Psoas muscle (tissue), 8 donors: ENCODE measurements at regions of chr1 and their contacts with region 1.

Region 1: GRCh38 chr1:167687919-167688519 is 33.8 kb upstream of the MPZL1 start:
- DNase-seq: no peak
- ATAC-seq: peak; percentile 36 to 61 (median 51)
- H3K4me3 ChIP-seq: no peak overlapping the region
- H3K27ac ChIP-seq: peak overlapping the region; percentile 78
- H3K4me1 ChIP-seq: peaks cover 52% of the 10 kb centered on the region
- H3K27me3 ChIP-seq: no peaks in the 10 kb centered on the region
- CTCF ChIP-seq: peak; percentile 96

Region 2: DNA sequence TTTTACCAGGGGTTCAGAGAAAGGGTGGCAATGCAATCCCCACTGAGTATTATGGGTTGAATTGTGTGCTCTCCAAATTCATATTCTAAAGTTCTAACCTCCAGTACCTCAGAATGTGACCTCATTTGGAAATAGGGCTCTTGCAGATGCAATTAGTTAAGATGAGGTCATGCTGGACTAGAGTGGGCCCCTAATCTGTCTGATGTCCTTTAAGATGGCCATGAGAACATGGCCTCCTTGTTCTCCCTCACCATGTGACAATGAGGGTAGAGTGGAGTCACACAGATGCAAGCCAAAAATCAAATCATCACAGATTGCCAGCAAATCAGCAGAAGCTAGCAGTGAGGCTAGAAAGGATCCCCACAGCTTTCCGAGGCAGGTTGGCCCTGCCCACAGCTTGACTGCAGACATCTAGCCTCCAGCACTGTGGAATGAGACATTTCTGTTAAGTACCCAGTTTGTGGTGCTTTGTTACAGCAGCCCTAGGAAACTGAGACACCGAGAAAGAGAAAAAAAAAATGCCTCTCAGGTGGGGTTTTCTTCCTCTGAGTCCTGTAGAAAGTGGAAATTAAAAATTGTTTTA is 109.0 kb before region 1 on chr1:
- intact Hi-C with region 1: no loop called
- DNase-seq: no peak
- ATAC-seq: no peak
- H3K4me3 ChIP-seq: no peak overlapping the region
- H3K27ac ChIP-seq: no peak overlapping the region
- H3K4me1 ChIP-seq: no peaks in the 10 kb centered on the region
- H3K27me3 ChIP-seq: no peaks in the 10 kb centered on the region
- CTCF ChIP-seq: no peak

Region 3: GRCh38 chr1:167599957-167600581 is 88.0 kb before region 1 on chr1:
- intact Hi-C with region 1: loop called (anchors 1 to 2 kb)
- DNase-seq: peak; percentile 31 to 59
- ATAC-seq: peak; percentile 85 to 94 (median 90)
- H3K4me3 ChIP-seq: no peak overlapping the region
- H3K27ac ChIP-seq: peak overlapping the region; percentile 51
- H3K4me1 ChIP-seq: peaks cover 24% of the 10 kb centered on the region
- H3K27me3 ChIP-seq: no peaks in the 10 kb centered on the region
- CTCF ChIP-seq: peak; percentile 62

Region 4: DNA sequence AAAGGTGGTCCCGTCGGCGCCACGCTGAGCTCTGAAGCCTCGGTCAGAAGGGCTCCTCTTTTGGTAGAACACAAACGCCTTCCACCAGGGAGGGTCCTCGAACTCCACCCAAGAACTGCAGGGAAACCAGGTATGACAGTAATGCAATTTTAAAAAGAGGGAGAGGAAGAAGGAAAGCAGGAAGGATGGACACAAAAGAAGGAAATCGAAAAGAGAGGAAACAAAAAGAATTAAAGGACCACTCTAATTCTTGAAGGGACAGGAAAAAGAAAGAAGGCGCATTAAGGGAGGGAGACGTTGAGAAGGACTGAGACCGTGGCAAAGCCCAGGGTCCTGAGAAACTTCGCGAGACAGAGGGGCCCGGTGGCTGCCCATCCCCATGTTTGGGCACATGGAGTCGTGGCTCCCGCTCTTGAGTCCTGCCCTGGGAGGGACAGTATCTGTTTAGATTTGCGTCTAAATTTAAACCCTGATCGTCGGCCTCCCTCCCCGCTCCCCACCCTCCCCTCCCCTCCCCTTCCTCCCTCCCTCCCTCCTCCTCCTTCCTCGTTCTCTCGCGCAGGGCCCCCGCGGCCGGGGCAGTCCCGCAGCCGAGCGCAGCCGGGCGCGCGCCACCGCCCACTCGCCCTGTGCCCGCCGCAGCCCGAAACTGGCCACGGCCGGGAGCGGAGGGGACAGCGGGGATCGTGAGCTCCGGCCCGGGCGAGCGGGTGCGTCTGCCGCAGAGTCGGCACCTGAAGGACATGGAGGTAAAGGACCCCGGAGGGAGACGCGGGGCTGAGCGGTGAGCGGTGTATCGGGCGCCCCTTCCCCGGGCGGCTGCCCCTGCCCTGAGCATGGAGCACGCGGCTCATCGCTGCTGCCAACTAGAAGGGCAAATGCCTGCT is 58.1 kb before region 1 on chr1 and contains the start of gene RCSD1:
- intact Hi-C with region 1: loop called (anchors 5 kb)
- DNase-seq: peak; percentile 54 to 80
- ATAC-seq: peak; percentile 83 to 86 (median 84)
- H3K4me3 ChIP-seq: peak within 1 kb of the TSS; percentile 87
- H3K27ac ChIP-seq: peak within 1 kb of the TSS; percentile 97
- H3K4me1 ChIP-seq: peaks cover 41% of the 10 kb centered on the region
- H3K27me3 ChIP-seq: no peaks in the 10 kb centered on the region
- CTCF ChIP-seq: no peak
- total RNA-seq, gene RCSD1: 9.9 to 34.2 (median 23.1) TPM

Region 5: GRCh38 chr1:167650269-167651160 is 37.5 kb before region 1 on chr1:
- intact Hi-C with region 1: loop called in 1 of 2 experiments (anchors 1 kb)
- DNase-seq: no peak
- ATAC-seq: peak; percentile 23 to 64 (median 54)
- H3K4me3 ChIP-seq: no peak overlapping the region
- H3K27ac ChIP-seq: peak overlapping the region; percentile 78
- H3K4me1 ChIP-seq: peaks cover 71% of the 10 kb centered on the region
- H3K27me3 ChIP-seq: no peaks in the 10 kb centered on the region
- CTCF ChIP-seq: no peak